ENCODE measurements at regions of chr15 and their contacts with region 1.

Region 1: DNA sequence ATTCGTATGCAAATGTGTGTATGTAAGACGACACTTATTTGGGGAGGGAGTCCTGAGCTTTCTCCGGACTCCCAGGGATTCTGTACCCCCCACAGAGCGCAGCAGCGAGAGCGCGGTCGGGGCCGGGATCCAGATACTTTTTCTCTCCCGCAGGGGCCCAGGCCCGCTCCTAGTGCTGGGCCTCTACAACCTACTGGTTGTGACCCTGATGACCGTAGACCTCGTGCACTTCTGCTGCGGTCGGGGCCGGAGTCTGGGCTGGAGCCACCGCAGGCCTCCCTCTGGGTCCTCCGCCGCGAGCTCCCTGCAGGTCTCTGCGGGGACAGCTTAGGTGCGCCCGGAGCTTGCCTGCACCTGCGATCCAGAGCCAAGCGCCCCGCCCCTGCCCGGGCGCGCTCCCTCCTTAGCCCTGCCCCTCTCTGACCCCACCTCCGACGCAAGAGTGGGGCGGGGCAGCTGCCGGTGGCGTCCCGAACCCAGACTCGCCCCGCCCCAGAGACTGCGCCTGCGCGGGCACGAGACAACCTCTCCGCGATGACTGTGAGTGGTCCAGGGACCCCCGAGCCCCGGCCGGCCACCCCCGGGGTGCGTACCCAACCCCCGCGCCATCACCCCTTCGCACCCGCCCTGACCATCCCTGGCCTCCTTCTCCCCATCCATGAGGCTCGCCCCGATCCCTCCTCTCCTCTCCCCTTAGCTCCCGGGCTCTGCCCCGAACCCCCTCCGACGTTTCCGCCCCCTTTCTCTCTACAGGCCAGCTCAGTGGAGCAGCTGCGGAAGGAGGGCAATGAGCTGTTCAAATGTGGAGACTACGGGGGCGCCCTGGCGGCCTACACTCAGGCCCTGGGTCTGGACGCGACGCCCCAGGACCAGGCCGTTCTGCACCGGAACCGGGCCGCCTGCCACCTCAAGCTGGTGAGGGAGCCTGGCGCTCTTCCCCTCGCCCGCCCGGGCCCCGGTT is at the start of gene UNC45A:
- DNase-seq: peak; percentile 89 to 93 (median 91)
- H3K4me3 ChIP-seq: peak within 1 kb of the TSS; percentile 63
- H3K27ac ChIP-seq: peak within 1 kb of the TSS; percentile 70 to 76
- H3K4me1 ChIP-seq: peaks cover 18% of the 10 kb centered on the region
- H3K27me3 ChIP-seq: no peaks in the 10 kb centered on the region
- CTCF ChIP-seq: no peak
- EP300 ChIP-seq: no peak
- POLR2A ChIP-seq: peak; percentile 30
- total RNA-seq, gene UNC45A: 26.2 to 75.6 (median 56.1) TPM

Region 2: GRCh38 chr15:90902040-90902839 is 32.8 kb before region 1 on chr15:
- intact Hi-C with region 1: loop called in 1 of 4 experiments (anchors 1 kb)
- DNase-seq: peak; percentile 71 to 82 (median 75)
- H3K4me3 ChIP-seq: peak overlapping the region; percentile 48
- H3K27ac ChIP-seq: peak overlapping the region; percentile 83 to 91
- H3K4me1 ChIP-seq: peaks cover 2% of the 10 kb centered on the region
- H3K27me3 ChIP-seq: no peaks in the 10 kb centered on the region
- CTCF ChIP-seq: peak; percentile 75 to 81 (median 79)
- EP300 ChIP-seq: no peak
- POLR2A ChIP-seq: no peak

Region 3: DNA sequence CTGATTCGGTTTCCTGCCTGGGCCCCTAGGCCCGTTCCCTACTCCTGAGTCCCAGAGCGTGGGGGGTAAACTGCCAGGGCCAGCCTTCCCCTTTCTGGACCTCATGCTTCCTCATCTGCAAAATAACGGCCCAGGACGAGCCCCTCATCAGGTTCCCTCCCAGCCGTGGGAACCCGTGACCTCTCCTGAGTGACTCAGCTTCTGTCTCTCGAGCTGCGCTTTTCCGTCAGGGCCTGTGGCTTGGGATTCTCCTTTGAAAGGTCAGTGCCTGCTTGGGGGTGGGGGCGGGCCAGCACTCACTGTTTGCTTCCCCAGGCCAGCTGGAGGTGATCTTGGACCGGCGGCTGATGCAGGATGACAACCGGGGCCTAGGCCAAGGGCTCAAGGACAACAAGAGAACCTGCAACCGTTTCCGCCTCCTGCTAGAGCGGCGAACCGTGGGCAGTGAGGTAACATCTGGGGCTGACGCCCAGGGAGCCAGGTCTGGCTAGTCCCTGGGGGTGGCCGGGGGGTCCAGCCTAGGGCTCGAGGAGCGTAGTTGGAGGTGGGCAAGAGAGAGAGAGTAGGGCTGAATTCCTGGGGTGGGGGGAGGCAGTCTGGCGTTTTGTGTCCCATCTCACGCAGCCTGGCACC is 19.1 kb before region 1 on chr15:
- intact Hi-C with region 1: no loop called
- DNase-seq: peak in 3 of 5 donors; percentile 35 to 55 (median 54)
- H3K4me3 ChIP-seq: no peak overlapping the region
- H3K27ac ChIP-seq: no peak overlapping the region
- H3K4me1 ChIP-seq: no peaks in the 10 kb centered on the region
- H3K27me3 ChIP-seq: no peaks in the 10 kb centered on the region
- CTCF ChIP-seq: no peak
- EP300 ChIP-seq: no peak
- POLR2A ChIP-seq: no peak

Measured in ovary (tissue), 10 donors.